ENCODE measurements at regions of chr12 and their contacts with region 1.

Region 1: GRCh38 chr12:122336015-122336946 is 70.0 kb upstream of the VPS33A start:
- DNase-seq: no peak
- H3K4me3 ChIP-seq: no peak overlapping the region
- CTCF ChIP-seq: peak; percentile 37

Region 2: DNA sequence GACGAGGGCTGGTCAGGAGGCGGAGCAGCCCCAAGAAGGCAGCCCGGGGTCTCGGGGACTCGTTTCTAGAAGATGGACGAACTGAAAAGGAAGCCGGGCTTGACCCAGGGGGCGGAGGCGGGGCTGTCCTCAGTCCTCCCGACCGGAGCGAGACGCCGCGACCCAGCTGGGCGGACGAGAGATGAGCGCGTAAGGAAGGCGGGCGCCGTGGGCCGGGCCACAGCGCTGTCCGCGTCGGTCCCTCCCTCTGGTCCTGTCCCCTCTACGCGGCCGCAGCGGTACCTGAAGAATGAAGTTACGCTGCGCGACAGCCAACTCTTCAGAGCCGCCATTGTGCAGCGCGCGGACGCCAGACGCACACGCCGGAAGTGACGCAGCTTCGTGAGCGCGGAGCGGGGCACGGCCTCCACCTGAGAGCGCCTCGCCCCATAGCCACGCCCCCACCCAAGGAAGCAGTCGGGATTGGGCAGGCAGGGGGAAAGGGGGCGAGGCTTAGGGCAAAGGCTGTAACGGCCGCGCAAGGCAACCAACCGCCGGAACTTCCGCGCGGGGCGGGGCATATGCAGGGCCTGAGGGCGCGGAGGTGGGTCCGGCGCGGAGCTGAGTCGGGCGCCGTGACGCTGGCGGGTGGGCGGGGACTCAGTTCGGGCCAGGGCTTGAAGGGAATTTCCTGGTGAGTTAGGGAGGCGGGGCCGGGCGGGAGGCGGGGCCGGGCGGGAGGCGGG is 110.4 kb before region 1 on chr12 and contains the start of gene DIABLO:
- CTCF ChIA-PET with region 1: no interaction called
- POLR2A ChIA-PET with region 1: no interaction called
- DNase-seq: peak; percentile 90
- H3K4me3 ChIP-seq: peak within 1 kb of the TSS; percentile 95
- CTCF ChIP-seq: no peak

Region 3: GRCh38 chr12:122322501-122322900 is 13.8 kb before region 1 on chr12:
- CTCF ChIA-PET with region 1: interaction called, 48 read pairs
- POLR2A ChIA-PET with region 1: interaction called, 5 read pairs
- DNase-seq: no peak
- H3K4me3 ChIP-seq: no peak overlapping the region
- CTCF ChIP-seq: no peak

Region 4: GRCh38 chr12:122350141-122350848 is 14.0 kb after region 1 on chr12:
- CTCF ChIA-PET with region 1: interaction called, 46 read pairs
- POLR2A ChIA-PET with region 1: no interaction called
- DNase-seq: no peak
- H3K4me3 ChIP-seq: no peak overlapping the region
- CTCF ChIP-seq: peak; percentile 36